ENCODE measurements at regions of chr14 and their contacts with region 1.

Region 1: DNA sequence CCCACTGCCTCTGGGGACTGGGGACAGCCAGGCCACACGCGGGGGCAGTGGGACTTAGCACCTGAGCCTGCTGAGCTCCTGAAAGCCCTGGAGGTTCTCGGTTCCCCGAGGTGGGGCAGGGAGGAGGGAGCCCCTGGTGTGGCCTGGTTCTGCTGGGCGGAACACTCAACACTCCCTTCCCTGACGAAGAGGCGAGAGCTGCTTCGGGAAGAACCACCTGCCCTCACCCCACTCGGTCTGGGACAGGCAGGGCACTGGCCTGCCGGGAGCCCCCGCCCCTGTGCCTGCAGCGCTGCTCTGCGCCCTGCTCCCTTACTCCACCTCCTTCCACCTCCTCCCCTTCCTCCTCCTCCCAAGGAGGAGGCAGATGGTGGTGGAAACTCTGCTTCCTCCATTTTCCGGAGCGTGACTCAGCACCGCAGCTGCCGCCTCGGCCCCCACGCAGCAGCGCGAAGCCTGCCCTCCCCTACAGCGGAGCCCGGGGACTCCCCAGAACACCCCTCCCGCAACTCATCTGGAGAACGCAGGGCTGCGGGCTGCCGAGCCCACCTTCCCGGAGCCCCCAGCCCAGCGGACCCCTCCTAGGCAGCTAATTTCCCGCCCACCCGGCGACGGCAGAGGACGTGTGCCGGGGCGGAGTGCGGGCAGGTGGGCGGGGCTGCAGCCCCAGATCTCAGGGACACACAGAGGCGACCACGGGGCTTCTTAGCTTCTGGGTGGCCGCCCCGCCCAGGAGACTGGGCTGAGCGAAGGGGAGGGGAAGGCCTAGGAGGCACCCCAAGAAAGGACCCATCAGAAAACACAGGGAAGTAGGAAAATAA is 11.7 kb upstream of the INF2 start:
- DNase-seq: peak; percentile 84
- ATAC-seq: peak; percentile 80
- H3K4me3 Mint-ChIP-seq: peak overlapping the region; percentile 78
- H3K27ac Mint-ChIP-seq: peak overlapping the region; percentile 87
- H3K4me1 Mint-ChIP-seq: peaks cover 21% of the 10 kb centered on the region
- H3K27me3 Mint-ChIP-seq: no peaks in the 10 kb centered on the region

Region 2: GRCh38 chr14:104689109-104689880 is 11.6 kb after region 1 on chr14 and contains the start of gene INF2:
- POLR2A ChIA-PET with region 1: interaction called, 52 read pairs
- DNase-seq: peak; percentile 71
- ATAC-seq: peak; percentile 46
- H3K4me3 Mint-ChIP-seq: peak within 1 kb of the TSS; percentile 80
- H3K27ac Mint-ChIP-seq: peak within 1 kb of the TSS; percentile 65
- H3K4me1 Mint-ChIP-seq: peaks cover 40% of the 10 kb centered on the region
- H3K27me3 Mint-ChIP-seq: peaks cover 6% of the 10 kb centered on the region
- total RNA-seq, gene INF2: 107 to 110 TPM

Measured in activated naive CD8-positive, alpha-beta T cell treated with anti-CD3 and anti-CD28 coated beads, Interleukin-2, amount 10 ng/mL, durations not matched to agents 7 days and 5 days (primary cell).